ENCODE measurements at regions of chr20 and their contacts with region 1.

Region 1: GRCh38 chr20:39070484-39071231 is 108.5 kb downstream of the DHX35 start:
- DNase-seq: no peak
- ATAC-seq: no peak
- H3K4me3 Mint-ChIP-seq: no peak overlapping the region
- H3K27ac Mint-ChIP-seq: no peak overlapping the region
- H3K4me1 Mint-ChIP-seq: no peaks in the 10 kb centered on the region
- H3K27me3 Mint-ChIP-seq: peaks cover 19% of the 10 kb centered on the region

Region 2: GRCh38 chr20:38863024-38863851 is 207.4 kb before region 1 on chr20:
- CTCF ChIA-PET with region 1: no interaction called
- POLR2A ChIA-PET with region 1: no interaction called
- DNase-seq: peak; percentile 62
- ATAC-seq: peak; percentile 78
- H3K4me3 Mint-ChIP-seq: peak overlapping the region; percentile 22
- H3K27ac Mint-ChIP-seq: peak overlapping the region; percentile 81
- H3K4me1 Mint-ChIP-seq: peaks cover 56% of the 10 kb centered on the region
- H3K27me3 Mint-ChIP-seq: no peaks in the 10 kb centered on the region

Region 3: GRCh38 chr20:39081255-39081654 is 10.6 kb after region 1 on chr20:
- CTCF ChIA-PET with region 1: interaction called, 31 read pairs
- POLR2A ChIA-PET with region 1: no interaction called
- DNase-seq: peak; percentile 85
- ATAC-seq: peak; percentile 72
- H3K4me3 Mint-ChIP-seq: no peak overlapping the region
- H3K27ac Mint-ChIP-seq: no peak overlapping the region
- H3K4me1 Mint-ChIP-seq: peaks cover 7% of the 10 kb centered on the region
- H3K27me3 Mint-ChIP-seq: peaks cover 30% of the 10 kb centered on the region

Measured in activated CD8-positive, alpha-beta T cell treated with anti-CD3 and anti-CD28 coated beads, Interleukin-2, amount 10 ng/mL, durations not matched to agents 7 days and 5 days (primary cell).